Activated B cell treated with CpG ODN at 0.5 μM for 24 hours (primary cell): ENCODE measurements at regions of chr7 and their contacts with region 1.

Region 1: DNA sequence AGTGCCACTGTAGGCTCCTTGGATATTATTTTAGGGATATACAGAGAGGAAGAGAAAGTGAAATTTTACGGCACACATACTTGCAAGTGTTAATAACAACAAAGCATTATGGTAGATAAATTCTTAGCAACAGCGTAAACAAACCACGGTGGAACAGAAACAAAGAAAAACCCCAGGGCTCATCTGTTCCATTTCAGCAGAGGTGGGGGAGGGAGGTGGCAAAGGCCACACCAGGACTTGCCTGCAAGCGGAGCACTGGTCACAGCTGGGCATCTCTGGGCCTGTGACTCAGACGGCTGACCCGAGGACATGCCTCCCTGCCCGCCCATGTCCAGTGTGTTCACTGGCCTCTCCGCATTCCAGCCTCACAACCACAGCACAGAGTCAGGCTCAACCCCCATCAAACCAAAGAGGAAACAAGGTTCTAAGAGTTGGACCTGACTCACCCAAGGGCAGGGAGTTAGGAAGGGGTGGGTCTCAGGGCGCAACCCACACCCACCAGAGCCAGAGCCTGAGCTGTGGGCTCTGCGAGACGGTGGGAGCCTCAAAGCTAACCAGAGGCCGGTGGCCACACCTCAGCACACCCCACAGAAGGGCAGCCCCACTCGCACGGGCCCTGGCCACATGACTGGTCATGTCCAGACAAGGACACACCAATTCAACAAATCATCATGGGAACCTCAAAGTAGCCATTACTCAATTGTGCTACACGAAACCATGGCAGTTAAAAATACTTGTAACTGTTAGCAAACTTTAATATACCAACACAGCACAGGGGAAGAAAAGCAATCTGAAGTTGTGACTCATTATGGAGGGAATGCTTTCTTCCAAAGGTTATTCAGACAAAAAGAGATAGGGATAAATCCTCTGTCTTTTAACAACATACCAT is 10.7 kb downstream of the ESYT2 start:
- DNase-seq: peak; percentile 32
- ATAC-seq: peak; percentile 79
- H3K4me3 Mint-ChIP-seq: peak overlapping the region; percentile 56
- H3K27ac Mint-ChIP-seq: peak overlapping the region; percentile 78
- H3K4me1 Mint-ChIP-seq: peaks cover 57% of the 10 kb centered on the region
- H3K27me3 Mint-ChIP-seq: no peaks in the 10 kb centered on the region
- CTCF ChIP-seq: no peak

Region 2: GRCh38 chr7:158710651-158711102 is 107.9 kb before region 1 on chr7:
- CTCF ChIA-PET with region 1: no interaction called
- POLR2A ChIA-PET with region 1: no interaction called
- intact Hi-C with region 1: no loop called
- DNase-seq: no peak
- ATAC-seq: no peak
- H3K4me3 Mint-ChIP-seq: no peak overlapping the region
- H3K27ac Mint-ChIP-seq: no peak overlapping the region
- H3K4me1 Mint-ChIP-seq: peaks cover 11% of the 10 kb centered on the region
- H3K27me3 Mint-ChIP-seq: peaks cover 2% of the 10 kb centered on the region
- CTCF ChIP-seq: no peak

Region 3: GRCh38 chr7:158802473-158803202 is 15.9 kb before region 1 on chr7:
- CTCF ChIA-PET with region 1: no interaction called
- POLR2A ChIA-PET with region 1: no interaction called
- intact Hi-C with region 1: no loop called
- DNase-seq: no peak
- ATAC-seq: no peak
- H3K4me3 Mint-ChIP-seq: no peak overlapping the region
- H3K27ac Mint-ChIP-seq: no peak overlapping the region
- H3K4me1 Mint-ChIP-seq: peaks cover 3% of the 10 kb centered on the region
- H3K27me3 Mint-ChIP-seq: no peaks in the 10 kb centered on the region
- CTCF ChIP-seq: no peak

Region 4: DNA sequence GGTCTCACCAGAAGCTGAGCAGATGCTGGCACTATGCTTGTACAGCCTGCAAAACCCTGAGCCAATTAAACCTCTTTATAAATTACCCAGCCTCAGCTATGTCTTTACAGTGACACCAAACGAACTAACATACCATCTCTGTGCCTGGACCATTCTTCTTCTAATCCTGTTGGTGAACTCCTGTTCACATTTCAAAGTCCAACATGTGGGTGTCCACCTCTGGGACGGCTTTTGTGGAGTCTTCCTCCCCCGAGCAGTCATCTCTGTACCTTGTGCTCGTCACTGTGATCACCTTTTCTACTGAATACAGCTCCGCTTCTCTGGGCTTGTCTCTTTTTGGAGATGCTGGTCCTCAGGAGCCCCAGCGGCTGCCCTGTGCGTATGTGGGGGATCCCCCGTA is 18.1 kb after region 1 on chr7:
- CTCF ChIA-PET with region 1: no interaction called
- POLR2A ChIA-PET with region 1: no interaction called
- intact Hi-C with region 1: no loop called
- DNase-seq: no peak
- ATAC-seq: no peak
- H3K4me3 Mint-ChIP-seq: no peak overlapping the region
- H3K27ac Mint-ChIP-seq: no peak overlapping the region
- H3K4me1 Mint-ChIP-seq: peaks cover 2% of the 10 kb centered on the region
- H3K27me3 Mint-ChIP-seq: no peaks in the 10 kb centered on the region
- CTCF ChIP-seq: no peak

Region 5: GRCh38 chr7:158856883-158857668 is 38.5 kb after region 1 on chr7:
- CTCF ChIA-PET with region 1: no interaction called
- POLR2A ChIA-PET with region 1: interaction called, 3 read pairs
- intact Hi-C with region 1: loop called (anchors 5 kb)
- DNase-seq: no peak
- ATAC-seq: peak; percentile 9
- H3K4me3 Mint-ChIP-seq: peak overlapping the region; percentile 98
- H3K27ac Mint-ChIP-seq: no peak overlapping the region
- H3K4me1 Mint-ChIP-seq: peaks cover 12% of the 10 kb centered on the region
- H3K27me3 Mint-ChIP-seq: no peaks in the 10 kb centered on the region
- CTCF ChIP-seq: no peak